ENCODE measurements at regions of chr7 and their contacts with region 1.

Region 1: DNA sequence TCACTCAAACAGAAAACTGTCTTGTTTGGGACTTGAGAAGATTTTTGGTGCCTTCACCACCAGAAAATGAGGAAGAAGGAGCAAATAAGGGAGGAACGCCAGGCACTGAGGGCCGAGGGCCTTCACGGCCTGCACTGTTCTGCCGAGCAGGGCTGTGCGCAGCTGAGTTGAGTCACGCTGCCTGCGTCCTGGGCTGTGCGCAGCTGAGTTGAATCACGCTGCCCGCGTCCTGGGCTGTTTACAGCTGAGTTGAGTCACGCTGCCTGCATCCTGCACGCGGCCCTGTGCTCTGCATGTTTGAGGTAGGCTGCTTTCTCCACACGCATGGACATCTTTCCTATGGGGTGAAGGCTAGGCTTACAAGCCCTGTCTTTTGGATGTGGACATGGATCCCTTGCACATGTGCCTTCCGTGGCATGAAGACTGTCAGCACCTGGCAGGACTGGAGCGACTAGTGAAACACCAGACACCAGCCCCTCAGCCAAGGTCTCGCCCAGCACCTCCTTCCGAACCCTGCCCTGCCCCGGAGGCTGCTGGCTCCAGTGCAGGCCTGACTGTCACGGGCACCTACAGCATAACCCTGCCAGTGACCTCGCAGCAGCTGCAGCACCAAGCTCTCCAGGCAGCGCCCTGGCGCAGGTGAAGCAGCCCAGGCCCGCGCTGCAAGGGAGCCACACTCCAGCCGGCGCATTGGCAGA is 96.7 kb downstream of the HTR5A start:
- DNase-seq: peak; percentile 89
- H3K4me3 Mint-ChIP-seq: no peak overlapping the region
- H3K27ac Mint-ChIP-seq: peak overlapping the region; percentile 91
- H3K4me1 Mint-ChIP-seq: peaks cover 16% of the 10 kb centered on the region
- H3K27me3 Mint-ChIP-seq: peaks cover 6% of the 10 kb centered on the region
- CTCF ChIP-seq: no peak

Region 2: DNA sequence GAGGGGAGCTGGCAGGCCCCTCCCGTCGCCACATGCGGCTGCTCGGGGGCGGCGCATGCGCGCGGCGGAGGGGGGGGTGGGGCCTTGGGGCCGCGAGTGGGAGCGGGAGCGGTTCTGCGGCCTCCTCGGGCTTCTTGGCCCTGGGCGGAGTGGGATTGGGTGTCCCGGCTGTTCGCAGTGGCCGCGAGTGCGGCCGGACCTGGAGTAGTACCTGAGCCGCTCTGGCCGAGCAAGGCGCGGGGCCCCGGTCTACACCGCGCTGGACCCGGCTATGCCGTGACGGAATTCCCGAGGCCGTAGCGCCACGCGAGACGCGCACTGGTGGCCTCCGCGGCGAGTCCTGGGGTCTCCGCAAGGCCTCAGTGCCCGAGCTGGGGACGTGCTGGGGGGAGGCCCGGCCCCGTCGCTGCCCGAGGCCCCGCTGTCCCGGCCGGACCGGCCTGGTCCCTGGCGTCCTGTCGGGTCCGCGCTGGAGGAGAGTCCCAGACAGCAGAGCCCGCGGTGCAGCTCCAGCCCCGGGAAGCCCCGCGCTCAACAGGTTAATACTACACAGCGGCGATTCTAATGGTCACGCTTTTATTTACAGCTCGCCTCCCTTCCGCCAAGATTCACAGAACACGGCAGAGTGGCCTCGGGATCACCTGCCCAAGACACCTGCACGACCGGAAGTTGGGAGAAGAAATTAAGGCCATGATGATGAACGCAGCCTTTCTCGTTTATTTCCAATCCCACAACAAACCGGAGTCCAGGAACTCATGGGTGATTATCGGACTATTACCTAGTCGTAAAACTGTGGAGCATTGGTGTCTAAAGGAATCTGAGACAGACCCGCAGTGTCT is 163.2 kb before region 1 on chr7:
- CTCF ChIA-PET with region 1: interaction called, 3 read pairs
- POLR2A ChIA-PET with region 1: interaction called, 25 read pairs
- intact Hi-C with region 1: loop called (anchors 5 kb)
- DNase-seq: peak; percentile 76
- H3K4me3 Mint-ChIP-seq: peak overlapping the region; percentile 88
- H3K27ac Mint-ChIP-seq: peak overlapping the region; percentile 87
- H3K4me1 Mint-ChIP-seq: no peaks in the 10 kb centered on the region
- H3K27me3 Mint-ChIP-seq: no peaks in the 10 kb centered on the region
- CTCF ChIP-seq: no peak

Region 3: DNA sequence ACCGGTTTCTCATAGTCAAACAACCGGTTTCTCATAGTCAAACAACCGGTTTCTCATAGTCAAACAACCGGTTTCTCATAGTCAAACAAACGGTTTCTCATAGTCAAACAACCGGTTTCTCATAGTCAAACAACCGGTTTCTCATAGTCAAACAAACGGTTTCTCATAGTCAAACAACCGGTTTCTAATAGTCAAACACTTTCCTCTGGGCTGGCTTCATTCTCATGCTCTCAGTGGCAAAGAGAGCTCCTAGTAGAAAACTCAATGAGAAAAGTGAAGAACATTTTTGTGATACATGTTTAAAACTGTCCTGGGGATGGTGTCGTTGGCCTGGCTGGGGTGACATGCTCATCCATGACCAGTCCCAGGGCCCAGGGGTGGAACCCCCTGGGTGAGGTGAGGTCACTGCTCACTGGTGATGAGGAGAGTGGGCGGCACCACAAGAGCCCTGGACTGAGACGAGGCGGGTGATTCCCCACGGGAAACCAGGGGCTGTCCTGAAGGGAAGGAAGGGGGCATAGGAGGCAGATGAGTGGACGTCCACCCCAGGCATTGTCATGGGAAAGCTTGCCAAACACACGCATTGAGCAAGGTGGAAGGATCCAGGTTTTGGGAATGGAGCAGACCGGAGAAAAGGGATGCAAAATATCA is 42.2 kb before region 1 on chr7:
- CTCF ChIA-PET with region 1: no interaction called
- POLR2A ChIA-PET with region 1: no interaction called
- intact Hi-C with region 1: no loop called
- DNase-seq: no peak
- H3K4me3 Mint-ChIP-seq: no peak overlapping the region
- H3K27ac Mint-ChIP-seq: no peak overlapping the region
- H3K4me1 Mint-ChIP-seq: no peaks in the 10 kb centered on the region
- H3K27me3 Mint-ChIP-seq: no peaks in the 10 kb centered on the region
- CTCF ChIP-seq: no peak

Region 4: GRCh38 chr7:155190688-155191087 is 23.9 kb after region 1 on chr7:
- CTCF ChIA-PET with region 1: interaction called, 15 read pairs
- POLR2A ChIA-PET with region 1: interaction called, 4 read pairs
- intact Hi-C with region 1: no loop called
- DNase-seq: peak; percentile 46
- H3K4me3 Mint-ChIP-seq: no peak overlapping the region
- H3K27ac Mint-ChIP-seq: no peak overlapping the region
- H3K4me1 Mint-ChIP-seq: peaks cover 5% of the 10 kb centered on the region
- H3K27me3 Mint-ChIP-seq: no peaks in the 10 kb centered on the region
- CTCF ChIP-seq: peak; percentile 85

Measured in MCF 10A (cell line).